Posterior cingulate gyrus (tissue), 11 donors: ENCODE measurements at regions of chr10 and their contacts with region 1.

Region 1: GRCh38 chr10:459743-460142 is 229.7 kb downstream of the DIP2C start:
- DNase-seq: peak in 1 of 10 donors; percentile 40

Region 2: DNA sequence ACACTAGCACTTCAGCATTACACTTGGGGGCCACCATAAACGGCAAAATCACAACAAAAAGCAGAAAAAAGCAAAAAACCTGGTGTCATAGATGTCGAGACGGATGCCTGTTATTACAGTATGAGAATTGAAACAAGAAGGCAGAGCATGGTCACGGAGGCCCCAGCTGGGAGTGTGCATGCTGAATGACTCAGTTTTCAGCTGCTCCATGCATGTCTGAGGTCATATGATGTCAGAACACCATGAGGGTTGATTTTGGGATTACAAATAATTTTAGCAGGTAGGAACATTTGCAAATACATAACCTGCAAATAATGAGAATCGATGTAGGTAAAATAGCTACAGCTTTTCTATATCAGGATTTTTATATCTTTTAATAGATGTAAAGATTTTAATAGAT is 305.4 kb before region 1 on chr10:
- intact Hi-C with region 1: no loop called
- DNase-seq: no peak

Region 3: DNA sequence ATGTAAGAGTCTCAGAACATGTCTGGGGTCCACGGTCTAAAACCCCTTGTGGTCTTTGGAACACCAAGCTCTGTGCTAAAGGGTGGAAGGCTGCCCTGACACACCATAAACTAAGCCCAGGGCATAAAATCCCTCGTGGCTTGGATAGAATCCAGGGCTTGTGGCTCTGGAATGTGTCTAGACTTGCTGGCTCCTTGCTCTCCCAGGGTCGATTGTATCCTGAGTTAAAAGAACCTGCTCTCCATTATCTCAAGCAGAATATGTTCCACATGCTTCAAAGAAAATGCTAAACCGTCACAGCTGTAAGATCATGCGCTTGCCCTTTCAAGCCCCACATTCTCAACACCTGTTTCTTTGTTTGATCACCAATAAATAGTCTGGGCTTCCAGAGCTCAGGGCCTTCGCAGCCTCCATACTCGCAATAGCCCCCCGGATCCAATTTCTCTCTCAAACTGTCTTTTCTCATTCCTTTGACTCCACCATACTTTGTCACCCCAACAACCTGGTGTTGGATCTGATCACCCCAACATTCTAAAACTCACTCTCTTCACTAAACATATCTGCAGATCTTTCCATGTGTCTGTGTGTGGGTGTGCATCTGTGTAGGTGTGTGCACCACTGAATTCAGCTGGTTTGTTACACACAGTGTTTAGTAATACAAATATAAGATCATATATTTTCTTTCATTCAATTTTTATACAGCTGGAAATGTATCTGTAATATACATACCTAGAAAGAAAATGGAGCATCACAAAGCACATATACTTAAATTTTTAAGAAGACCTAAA is 86.0 kb before region 1 on chr10:
- intact Hi-C with region 1: no loop called
- DNase-seq: no peak

Region 4: DNA sequence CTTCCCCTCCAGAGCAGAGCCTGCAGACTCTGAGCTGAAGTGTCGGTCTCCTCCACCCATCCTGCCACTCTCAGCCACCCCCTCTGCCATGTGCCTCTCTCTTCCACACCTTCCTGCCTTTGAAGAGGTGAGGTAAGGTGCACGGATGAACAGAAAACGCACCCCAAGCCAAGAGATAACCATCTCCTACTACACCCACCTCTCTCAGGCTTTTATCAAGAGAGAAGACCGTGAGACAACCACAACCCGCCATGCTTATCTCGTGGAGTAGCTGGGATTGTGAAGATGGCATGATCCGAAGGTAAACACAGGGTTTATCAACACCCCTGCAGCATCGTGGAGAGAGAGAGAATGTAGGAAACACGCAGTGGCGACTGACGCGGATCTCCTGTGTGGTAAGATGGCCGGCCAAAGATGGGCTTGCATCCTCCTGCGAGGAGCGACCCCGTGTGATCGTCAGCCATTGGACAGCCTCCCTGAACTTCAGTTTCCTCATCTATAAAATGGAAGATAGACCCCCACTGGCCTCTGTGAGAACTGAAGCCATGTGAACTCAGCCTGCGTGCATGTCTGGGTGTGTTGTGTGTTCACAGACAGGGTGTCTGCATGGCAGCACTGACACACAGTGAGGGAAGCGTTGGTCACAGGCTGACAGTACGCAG is 10.7 kb after region 1 on chr10:
- intact Hi-C with region 1: loop called (anchors 1 kb)
- DNase-seq: peak in 1 of 10 donors; percentile 46